Activated T-helper 2 cell treated with anti-CD3 and anti-CD28 coated beads, Interferon-gamma antibody, Interleukin-2, Interleukin-4, amounts not matched to agents 10 μg/mL and 5 μg/mL and 100 μg/mL, durations not matched to agents 14 hours and 24 hours and 36 hours (primary cell): ENCODE measurements at regions of chr1 and their contacts with region 1.

Region 1: GRCh38 chr1:150765296-150765976 is at the start of gene CTSS:
- DNase-seq: no peak
- H3K4me3 Mint-ChIP-seq: peak within 1 kb of the TSS; percentile 85
- H3K27ac Mint-ChIP-seq: peak within 1 kb of the TSS; percentile 88
- H3K4me1 Mint-ChIP-seq: peaks cover 27% of the 10 kb centered on the region
- H3K27me3 Mint-ChIP-seq: peaks cover 1% of the 10 kb centered on the region
- total RNA-seq, gene CTSS: 42.0 and 42.1 TPM in 2 replicates

Region 2: GRCh38 chr1:150696590-150697524 is 68.6 kb before region 1 on chr1 and contains the start of gene GOLPH3L:
- intact Hi-C with region 1: loop called (anchors 5 kb)
- DNase-seq: peak; percentile 91
- H3K4me3 Mint-ChIP-seq: peak within 1 kb of the TSS; percentile 96
- H3K27ac Mint-ChIP-seq: peak within 1 kb of the TSS; percentile 88
- H3K4me1 Mint-ChIP-seq: peaks cover 17% of the 10 kb centered on the region
- H3K27me3 Mint-ChIP-seq: peaks cover 9% of the 10 kb centered on the region
- total RNA-seq, gene GOLPH3L: 21.3 and 22.4 TPM in 2 replicates

Region 3: DNA sequence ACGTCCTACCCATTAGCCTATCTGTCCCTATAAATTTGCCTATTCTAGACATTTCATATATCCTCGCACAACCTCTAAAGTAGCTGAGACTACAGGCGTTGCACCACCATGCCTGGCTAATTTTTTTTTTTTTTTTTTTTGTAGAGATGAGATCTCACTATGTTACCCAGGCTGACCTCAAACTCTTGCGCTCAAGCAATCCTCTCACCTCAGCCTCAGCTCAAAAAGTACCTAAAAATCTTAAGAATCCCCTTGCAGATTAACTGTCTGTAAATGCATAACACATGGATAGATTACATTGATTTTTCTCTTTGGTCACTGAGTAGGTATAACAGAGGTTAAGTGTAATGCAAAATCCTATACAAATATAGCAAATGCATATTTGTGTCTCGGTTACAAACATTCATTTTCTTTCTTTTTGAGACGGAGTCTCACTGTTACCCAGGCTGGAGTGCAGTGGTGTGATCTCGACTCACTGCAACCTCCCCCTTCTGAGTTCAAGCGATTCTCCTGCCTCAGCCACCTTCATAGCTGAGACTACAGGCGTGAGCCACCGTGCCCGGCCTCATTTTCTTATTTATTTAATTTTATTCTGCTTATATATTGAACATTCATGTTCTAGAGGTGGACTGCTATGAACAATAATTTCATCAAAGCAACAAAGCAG is 47.1 kb before region 1 on chr1:
- intact Hi-C with region 1: no loop called
- DNase-seq: no peak
- H3K4me3 Mint-ChIP-seq: no peak overlapping the region
- H3K27ac Mint-ChIP-seq: no peak overlapping the region
- H3K4me1 Mint-ChIP-seq: no peaks in the 10 kb centered on the region
- H3K27me3 Mint-ChIP-seq: peaks cover 5% of the 10 kb centered on the region

Region 4: GRCh38 chr1:150778409-150778808 is 13.0 kb after region 1 on chr1:
- intact Hi-C with region 1: no loop called
- DNase-seq: no peak
- H3K4me3 Mint-ChIP-seq: no peak overlapping the region
- H3K27ac Mint-ChIP-seq: no peak overlapping the region
- H3K4me1 Mint-ChIP-seq: peaks cover 12% of the 10 kb centered on the region
- H3K27me3 Mint-ChIP-seq: no peaks in the 10 kb centered on the region

Region 5: GRCh38 chr1:150836129-150836773 is 70.8 kb after region 1 on chr1:
- intact Hi-C with region 1: no loop called
- DNase-seq: no peak
- H3K4me3 Mint-ChIP-seq: no peak overlapping the region
- H3K27ac Mint-ChIP-seq: peak overlapping the region; percentile 26
- H3K4me1 Mint-ChIP-seq: peaks cover 14% of the 10 kb centered on the region
- H3K27me3 Mint-ChIP-seq: no peaks in the 10 kb centered on the region